ENCODE measurements at regions of chrX and their contacts with region 1.

Region 1: DNA sequence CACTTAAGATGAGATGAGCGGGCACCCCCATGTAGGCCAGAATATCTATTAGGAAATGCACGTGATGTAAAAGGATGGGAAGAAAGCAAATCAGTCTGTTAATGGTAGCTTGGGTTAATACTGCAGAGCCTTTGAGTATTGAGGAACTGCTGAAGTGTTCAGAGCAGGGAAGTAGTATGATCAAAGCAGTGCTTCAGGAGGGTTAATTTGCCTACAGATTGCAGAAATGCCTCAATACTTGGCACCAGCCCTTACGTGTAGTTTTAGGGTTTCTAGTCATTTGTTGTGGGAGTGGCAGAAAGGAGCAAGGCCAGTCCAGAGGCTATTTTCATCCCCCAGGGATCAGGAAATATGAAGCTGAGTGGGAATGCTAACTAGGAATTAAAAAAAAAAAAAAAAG is 19.7 kb downstream of the ZFX start:
- DNase-seq: no peak
- H3K4me3 ChIP-seq: no peak overlapping the region
- H3K4me3 Mint-ChIP-seq: peak overlapping the region in 5 of 8 donors; percentile 25 to 78 (median 35)
- H3K27ac ChIP-seq: no peak overlapping the region
- H3K27ac Mint-ChIP-seq: peak overlapping the region; percentile 59 to 87 (median 75)
- H3K4me1 ChIP-seq: peaks cover 63% of the 10 kb centered on the region
- H3K4me1 Mint-ChIP-seq: peaks cover 39 to 77% (median 50%) of the 10 kb centered on the region in 4 donors
- H3K27me3 ChIP-seq: no peaks in the 10 kb centered on the region
- H3K27me3 Mint-ChIP-seq: no peaks in the 10 kb centered on the region

Region 2: DNA sequence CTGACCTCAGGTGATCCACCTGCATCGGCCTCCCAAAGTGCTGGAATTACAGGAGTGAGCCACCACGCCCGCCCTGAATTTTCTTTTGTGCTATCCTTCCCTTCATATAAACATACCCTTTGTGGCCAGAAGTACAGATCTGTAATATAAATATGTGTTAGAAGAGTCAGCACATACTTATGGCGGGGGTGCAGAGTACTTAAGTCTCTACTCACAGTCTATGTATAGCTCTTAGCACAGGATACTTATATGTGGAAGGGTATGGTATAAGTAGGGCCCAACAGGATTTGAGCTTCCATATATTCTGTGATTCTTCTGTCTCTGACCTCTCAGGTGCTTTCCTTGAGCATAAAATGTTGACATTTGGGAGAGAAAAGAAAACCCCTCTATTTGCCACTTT is 243.2 kb before region 1 on chrX:
- CTCF ChIA-PET with region 1: no interaction called
- POLR2A ChIA-PET with region 1: no interaction called
- intact Hi-C with region 1: no loop called
- DNase-seq: no peak
- H3K4me3 ChIP-seq: no peak overlapping the region
- H3K4me3 Mint-ChIP-seq: no peak overlapping the region
- H3K27ac ChIP-seq: no peak overlapping the region
- H3K27ac Mint-ChIP-seq: no peak overlapping the region
- H3K4me1 ChIP-seq: peaks cover 7% of the 10 kb centered on the region
- H3K4me1 Mint-ChIP-seq: peaks cover 1 to 3% (median 2%) of the 10 kb centered on the region in 4 donors
- H3K27me3 ChIP-seq: no peaks in the 10 kb centered on the region
- H3K27me3 Mint-ChIP-seq: no peaks in the 10 kb centered on the region

Region 3: DNA sequence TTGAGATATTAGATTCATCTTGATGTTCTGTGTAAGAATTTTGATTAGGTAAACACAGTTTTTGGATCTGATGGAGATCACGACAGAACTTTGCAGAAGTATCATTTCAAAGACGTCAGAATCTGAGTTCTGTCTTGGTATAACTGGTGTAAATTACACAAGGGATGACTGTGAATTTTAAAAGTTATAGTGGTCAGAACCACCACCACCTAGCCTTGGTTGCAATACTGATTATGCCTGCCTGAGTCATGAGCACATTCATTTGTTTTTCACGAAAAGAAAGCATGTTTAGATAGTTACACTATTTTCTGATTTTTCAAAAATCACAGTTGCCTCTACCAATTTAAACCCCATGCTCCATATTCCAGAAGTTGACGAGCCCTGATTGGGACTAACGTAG is 35.1 kb after region 1 on chrX:
- CTCF ChIA-PET with region 1: no interaction called
- POLR2A ChIA-PET with region 1: no interaction called
- intact Hi-C with region 1: loop called (anchors 5 kb)
- DNase-seq: no peak
- H3K4me3 ChIP-seq: no peak overlapping the region
- H3K4me3 Mint-ChIP-seq: no peak overlapping the region
- H3K27ac ChIP-seq: no peak overlapping the region
- H3K27ac Mint-ChIP-seq: peak overlapping the region in 2 of 7 donors; percentile 19 to 33
- H3K4me1 ChIP-seq: peaks cover 16% of the 10 kb centered on the region
- H3K4me1 Mint-ChIP-seq: peaks cover 36 to 52% (median 44%) of the 10 kb centered on the region in 4 donors
- H3K27me3 ChIP-seq: no peaks in the 10 kb centered on the region
- H3K27me3 Mint-ChIP-seq: no peaks in the 10 kb centered on the region

Region 4: GRCh38 chrX:24294620-24295019 is 125.4 kb after region 1 on chrX:
- CTCF ChIA-PET with region 1: no interaction called
- POLR2A ChIA-PET with region 1: no interaction called
- intact Hi-C with region 1: no loop called
- DNase-seq: no peak
- H3K4me3 ChIP-seq: no peak overlapping the region
- H3K4me3 Mint-ChIP-seq: no peak overlapping the region
- H3K27ac ChIP-seq: no peak overlapping the region
- H3K27ac Mint-ChIP-seq: no peak overlapping the region
- H3K4me1 ChIP-seq: no peaks in the 10 kb centered on the region
- H3K4me1 Mint-ChIP-seq: no peaks in the 10 kb centered on the region
- H3K27me3 ChIP-seq: no peaks in the 10 kb centered on the region
- H3K27me3 Mint-ChIP-seq: peaks cover 0 to 2% of the 10 kb centered on the region in 2 donors